IMR-90 (cell line): ENCODE measurements at regions of chr5 and their contacts with region 1.

Region 1: GRCh38 chr5:146130440-146131045 is 25.2 kb upstream of the PLAC8L1 start:
- DNase-seq: peak; percentile 53
- ATAC-seq: no peak
- H3K4me3 ChIP-seq: no peak overlapping the region
- H3K27ac ChIP-seq: no peak overlapping the region
- H3K4me1 ChIP-seq: no peaks in the 10 kb centered on the region
- H3K27me3 ChIP-seq: no peaks in the 10 kb centered on the region
- CTCF ChIP-seq: peak; percentile 68
- POLR2A ChIP-seq: no peak
- RAD21 ChIP-seq: peak; percentile 68

Region 2: DNA sequence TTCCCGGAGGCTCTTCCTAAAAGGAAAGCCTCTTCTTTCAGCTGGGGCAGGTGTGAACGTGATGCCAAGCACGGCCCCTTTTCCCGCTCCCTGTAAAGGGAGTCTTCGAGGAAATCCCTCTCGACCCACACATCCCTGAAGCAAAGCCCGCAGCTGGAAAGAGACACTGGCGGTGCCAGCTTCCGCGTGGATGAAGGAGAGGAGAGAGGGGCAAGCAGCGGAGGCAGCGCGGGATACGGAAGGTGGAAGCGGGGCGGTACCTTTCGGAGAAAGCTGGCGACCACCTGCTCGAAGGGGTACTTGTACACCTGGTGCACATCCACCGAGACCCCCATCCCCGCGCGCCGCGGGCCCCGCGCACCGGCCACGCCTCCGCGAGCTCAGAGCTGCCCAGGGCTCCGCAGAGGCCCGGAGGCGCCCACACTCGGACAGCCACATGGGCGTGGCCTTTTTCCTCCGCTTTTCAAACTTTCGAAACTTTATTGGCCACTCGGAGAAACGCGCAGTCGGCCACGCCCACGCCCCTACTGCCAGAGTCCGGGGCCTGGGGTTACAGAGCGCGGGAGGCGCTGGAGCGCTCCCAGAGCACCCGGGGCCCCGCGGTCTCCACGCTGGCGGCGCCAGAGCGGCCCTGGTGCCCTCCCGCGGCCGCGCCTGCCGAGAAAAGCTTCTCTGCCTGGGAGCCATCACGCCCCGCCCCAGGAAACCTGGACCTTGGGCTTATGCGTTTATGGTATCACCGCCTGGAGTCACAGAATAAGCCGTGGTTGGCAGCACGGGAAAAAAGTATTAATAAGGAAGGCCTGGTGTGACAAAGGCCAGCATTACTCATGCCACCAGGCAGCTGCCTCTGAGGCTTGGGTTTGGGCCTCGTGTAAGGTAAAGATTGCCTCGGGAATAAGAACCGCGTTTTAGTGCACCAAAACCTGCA is 295.4 kb before region 1 on chr5 and contains the start of gene PRELID2:
- CTCF ChIA-PET with region 1: no interaction called
- POLR2A ChIA-PET with region 1: no interaction called
- dilution Hi-C with region 1: no loop called
- in situ Hi-C with region 1: no loop called
- intact Hi-C with region 1: loop called (anchors 5 kb)
- DNase-seq: peak; percentile 84
- ATAC-seq: peak; percentile 91
- H3K4me3 ChIP-seq: peak within 1 kb of the TSS; percentile 60
- H3K27ac ChIP-seq: peak within 1 kb of the TSS; percentile 13
- H3K4me1 ChIP-seq: peaks cover 5% of the 10 kb centered on the region
- H3K27me3 ChIP-seq: no peaks in the 10 kb centered on the region
- CTCF ChIP-seq: 0 out of 2 replicates have a peak, but pooled peaks have one; percentile 3
- POLR2A ChIP-seq: peak; percentile 52; the same call in 1 of the 2 replicates
- RAD21 ChIP-seq: peak; percentile 7; the same call in 1 of the 2 replicates
- total RNA-seq, gene PRELID2: 8.6 and 13.9 TPM in 2 replicates

Region 3: GRCh38 chr5:146118322-146118721 is 12.2 kb before region 1 on chr5:
- CTCF ChIA-PET with region 1: interaction called, 4 read pairs
- POLR2A ChIA-PET with region 1: interaction called, 4 read pairs
- dilution Hi-C with region 1: no loop called
- in situ Hi-C with region 1: no loop called
- intact Hi-C with region 1: loop called (anchors 1 kb)
- DNase-seq: no peak
- ATAC-seq: no peak
- H3K4me3 ChIP-seq: no peak overlapping the region
- H3K27ac ChIP-seq: no peak overlapping the region
- H3K4me1 ChIP-seq: no peaks in the 10 kb centered on the region
- H3K27me3 ChIP-seq: no peaks in the 10 kb centered on the region
- CTCF ChIP-seq: no peak
- POLR2A ChIP-seq: no peak
- RAD21 ChIP-seq: no peak

Region 4: DNA sequence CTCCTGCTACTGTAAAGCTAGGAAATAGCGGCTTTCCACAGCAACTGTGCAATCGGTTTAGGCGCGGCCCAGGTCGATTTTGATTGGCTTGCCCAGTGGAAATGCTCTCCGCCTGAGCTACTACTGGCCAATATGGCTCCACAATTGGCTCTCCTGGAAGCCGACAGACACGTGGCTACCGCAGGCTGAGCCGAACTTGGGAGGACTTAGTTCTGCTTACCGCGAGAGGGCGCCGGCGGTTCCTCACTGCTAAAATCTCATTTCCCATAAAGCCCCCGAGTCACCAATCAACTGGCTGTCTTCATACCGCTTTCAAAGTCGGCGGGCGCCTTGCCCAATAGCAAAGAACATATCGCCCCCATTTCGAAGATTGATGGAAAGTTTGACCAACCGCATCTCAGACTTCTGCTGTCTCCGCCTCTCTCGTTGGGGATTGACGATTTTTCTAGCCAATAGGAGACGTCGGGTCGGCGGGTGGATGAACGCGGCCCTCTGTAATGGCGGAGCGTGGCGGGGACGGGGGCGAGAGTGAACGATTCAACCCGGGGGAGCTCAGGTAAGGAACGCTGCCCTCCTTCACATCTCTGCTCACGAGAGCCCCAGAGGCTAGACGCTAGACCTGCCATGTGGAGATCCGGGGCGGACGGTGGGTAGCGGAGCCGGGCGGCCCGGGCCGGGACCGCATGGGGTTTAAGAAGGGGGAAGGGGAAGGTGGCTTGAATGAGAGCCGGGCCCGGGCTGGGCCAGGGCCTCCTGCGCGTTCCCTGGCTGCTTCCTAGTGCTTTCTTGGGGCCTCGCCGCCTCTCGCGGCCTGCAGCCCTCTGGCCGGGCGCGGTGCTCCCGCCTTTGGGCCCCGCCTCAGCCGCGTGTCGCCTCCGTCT is 316.6 kb after region 1 on chr5 and contains the start of gene TCERG1:
- CTCF ChIA-PET with region 1: no interaction called
- POLR2A ChIA-PET with region 1: no interaction called
- dilution Hi-C with region 1: no loop called
- in situ Hi-C with region 1: loop called (anchors 25 kb)
- intact Hi-C with region 1: no loop called
- DNase-seq: peak; percentile 100
- ATAC-seq: peak; percentile 95
- H3K4me3 ChIP-seq: peak within 1 kb of the TSS; percentile 79
- H3K27ac ChIP-seq: peak within 1 kb of the TSS; percentile 91
- H3K4me1 ChIP-seq: no peaks in the 10 kb centered on the region
- H3K27me3 ChIP-seq: no peaks in the 10 kb centered on the region
- CTCF ChIP-seq: peak; percentile 94
- POLR2A ChIP-seq: peak; percentile 82
- RAD21 ChIP-seq: no peak
- total RNA-seq, gene TCERG1: 21.9 and 32.2 TPM in 2 replicates